ENCODE measurements at regions of chr7 and their contacts with region 1.

Region 1: GRCh38 chr7:24073651-24074420 is 210.2 kb upstream of the NPY start:
- DNase-seq: no peak
- H3K4me3 ChIP-seq: no peak overlapping the region
- H3K27ac ChIP-seq: no peak overlapping the region
- H3K4me1 ChIP-seq: no peaks in the 10 kb centered on the region
- H3K27me3 ChIP-seq: no peaks in the 10 kb centered on the region
- CTCF ChIP-seq: no peak
- POLR2A ChIP-seq: no peak

Region 2: GRCh38 chr7:23691320-23691719 is 382.5 kb before region 1 on chr7:
- intact Hi-C with region 1: loop called (anchors 5 kb)
- DNase-seq: no peak
- H3K4me3 ChIP-seq: no peak overlapping the region
- H3K27ac ChIP-seq: peak overlapping the region in 1 of 2 donors; percentile 45
- H3K4me1 ChIP-seq: no peaks in the 10 kb centered on the region
- H3K27me3 ChIP-seq: no peaks in the 10 kb centered on the region
- CTCF ChIP-seq: no peak
- POLR2A ChIP-seq: no peak

Region 3: GRCh38 chr7:24025094-24025493 is 48.7 kb before region 1 on chr7:
- intact Hi-C with region 1: no loop called
- DNase-seq: no peak
- H3K4me3 ChIP-seq: no peak overlapping the region
- H3K27ac ChIP-seq: no peak overlapping the region
- H3K4me1 ChIP-seq: no peaks in the 10 kb centered on the region
- H3K27me3 ChIP-seq: no peaks in the 10 kb centered on the region
- CTCF ChIP-seq: no peak
- POLR2A ChIP-seq: no peak

Measured in breast epithelium (tissue), 4 donors.